ENCODE measurements at regions of chr16 and their contacts with region 1.

Region 1: GRCh38 chr16:30534368-30535105 is at the start of gene ZNF747:
- DNase-seq: peak; percentile 92 to 93
- ATAC-seq: peak; percentile 85
- total RNA-seq, gene ZNF747: 9.8 to 11.7 TPM

Region 2: GRCh38 chr16:30065143-30065850 is 469.2 kb before region 1 on chr16 and contains the start of gene ALDOA:
- intact Hi-C with region 1: no loop called
- DNase-seq: peak; percentile 98
- ATAC-seq: peak; percentile 79
- total RNA-seq, gene ALDOA: 1,798 to 1,835 TPM

Region 3: DNA sequence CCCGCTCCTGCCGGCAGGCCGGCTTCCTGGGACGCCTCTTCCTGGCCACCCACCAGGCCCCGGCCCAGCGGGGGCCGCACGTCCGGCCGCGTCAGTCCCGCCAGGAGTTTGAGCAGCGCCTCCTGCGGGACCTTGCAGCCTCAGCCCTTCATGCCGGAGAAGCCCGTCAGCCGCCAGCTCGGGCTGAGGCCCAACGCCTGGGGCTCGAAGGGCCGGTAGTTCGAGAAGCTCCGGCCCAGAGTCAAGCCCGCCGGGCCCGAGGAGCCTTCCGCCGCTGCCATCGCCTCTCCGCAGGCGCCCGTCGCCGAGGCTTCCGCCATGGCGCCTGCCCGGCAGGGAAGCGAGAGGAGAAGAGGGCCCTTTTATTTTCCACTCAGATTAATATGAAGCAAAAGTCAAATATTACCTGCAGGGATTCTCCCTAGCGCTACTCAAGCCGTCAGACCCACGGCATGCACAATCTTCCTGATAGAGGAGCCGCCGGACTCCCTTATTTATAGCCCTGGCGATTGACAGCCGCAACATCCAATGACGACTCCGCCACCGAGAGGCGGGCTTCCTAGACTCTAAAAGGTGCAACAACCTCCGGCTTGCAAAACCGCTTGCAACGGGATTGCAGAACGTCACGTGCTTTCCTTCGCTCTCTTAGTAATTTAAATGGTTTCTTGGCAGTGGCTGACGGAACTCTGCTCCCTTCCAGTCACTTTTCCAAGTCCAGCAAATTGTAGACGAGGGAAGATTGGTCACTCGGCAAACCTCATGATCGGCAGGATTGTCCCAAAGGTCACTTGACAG is 88.9 kb before region 1 on chr16 and contains the start of gene SEPHS2:
- intact Hi-C with region 1: loop called in 1 of 2 experiments (anchors 10 kb)
- DNase-seq: peak; percentile 98
- ATAC-seq: peak; percentile 84
- total RNA-seq, gene SEPHS2: 157 to 183 TPM

Measured in left colon (tissue), 2 donors.